Colonic mucosa (tissue), 4 donors: ENCODE measurements at regions of chr22 and their contacts with region 1.

Region 1: GRCh38 chr22:46576556-46577367 is 39.3 kb upstream of the CELSR1 start:
- DNase-seq: no peak
- H3K4me3 ChIP-seq: peak overlapping the region; percentile 79
- H3K27ac ChIP-seq: peak overlapping the region; percentile 86
- H3K4me1 ChIP-seq: peaks cover 31% of the 10 kb centered on the region
- H3K27me3 ChIP-seq: no peaks in the 10 kb centered on the region
- CTCF ChIP-seq: no peak

Region 2: GRCh38 chr22:46737976-46738646 is 161.3 kb after region 1 on chr22 and contains the start of gene CERK:
- intact Hi-C with region 1: loop called (anchors 10 kb)
- DNase-seq: peak; percentile 80
- H3K4me3 ChIP-seq: peak within 1 kb of the TSS; percentile 84
- H3K27ac ChIP-seq: peak within 1 kb of the TSS; percentile 88
- H3K4me1 ChIP-seq: peaks cover 36% of the 10 kb centered on the region
- H3K27me3 ChIP-seq: no peaks in the 10 kb centered on the region
- CTCF ChIP-seq: no peak
- total RNA-seq, gene CERK: 24.7 to 46.6 TPM

Region 3: DNA sequence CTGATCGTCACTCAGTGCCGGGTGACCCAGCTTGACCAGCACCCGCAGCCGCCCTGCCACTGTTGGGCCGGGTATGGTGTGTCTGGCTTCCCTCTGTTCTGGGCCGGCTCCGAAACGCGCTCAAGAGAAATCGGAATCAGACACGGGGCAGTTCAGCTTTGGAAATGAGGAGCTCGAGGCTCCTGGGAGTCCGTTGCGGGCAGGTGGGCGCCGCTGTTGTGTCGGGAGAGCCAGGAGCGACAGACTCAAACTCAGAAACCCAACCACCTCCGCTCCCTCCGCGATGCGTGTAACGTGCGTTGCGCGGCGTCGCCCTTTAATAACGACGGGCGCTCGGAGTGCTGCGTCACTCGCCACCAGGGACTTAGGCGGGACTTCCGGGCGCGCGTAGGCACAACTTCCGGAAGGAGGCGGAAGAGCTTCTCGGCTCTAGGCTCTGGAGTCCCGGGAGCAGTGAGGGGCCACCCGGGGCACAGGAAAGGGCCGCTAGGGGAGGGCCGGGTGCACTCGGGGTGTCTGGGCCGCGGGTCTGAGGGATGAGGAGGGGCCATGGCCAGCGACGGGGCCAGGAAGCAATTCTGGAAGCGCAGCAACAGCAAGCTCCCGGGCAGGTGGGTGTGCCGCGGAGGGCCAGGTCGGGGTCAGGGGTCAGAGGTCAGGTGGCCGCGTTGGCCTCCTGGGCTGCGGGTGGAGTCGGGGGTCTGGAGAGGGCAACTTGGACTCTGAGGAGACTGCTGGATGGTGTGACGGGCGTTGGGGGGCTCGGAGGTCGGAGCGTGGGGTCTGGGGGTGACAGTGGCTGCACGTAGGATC is 185.7 kb after region 1 on chr22 and contains the start of gene TBC1D22A:
- intact Hi-C with region 1: no loop called
- DNase-seq: peak; percentile 96
- H3K4me3 ChIP-seq: peak within 1 kb of the TSS; percentile 92
- H3K27ac ChIP-seq: peak within 1 kb of the TSS; percentile 93
- H3K4me1 ChIP-seq: peaks cover 8% of the 10 kb centered on the region
- H3K27me3 ChIP-seq: no peaks in the 10 kb centered on the region
- CTCF ChIP-seq: no peak
- total RNA-seq, gene TBC1D22A: 34.2 to 36.4 TPM